ENCODE measurements at regions of chr2 and their contacts with region 1.

Region 1: GRCh38 chr2:227238238-227239237 is 74.1 kb downstream of the COL4A3 start:
- DNase-seq: peak; percentile 80
- ATAC-seq: no peak
- H3K4me3 Mint-ChIP-seq: no peak overlapping the region
- H3K27ac Mint-ChIP-seq: no peak overlapping the region
- H3K4me1 Mint-ChIP-seq: no peaks in the 10 kb centered on the region
- H3K27me3 Mint-ChIP-seq: peaks cover 6% of the 10 kb centered on the region

Region 2: DNA sequence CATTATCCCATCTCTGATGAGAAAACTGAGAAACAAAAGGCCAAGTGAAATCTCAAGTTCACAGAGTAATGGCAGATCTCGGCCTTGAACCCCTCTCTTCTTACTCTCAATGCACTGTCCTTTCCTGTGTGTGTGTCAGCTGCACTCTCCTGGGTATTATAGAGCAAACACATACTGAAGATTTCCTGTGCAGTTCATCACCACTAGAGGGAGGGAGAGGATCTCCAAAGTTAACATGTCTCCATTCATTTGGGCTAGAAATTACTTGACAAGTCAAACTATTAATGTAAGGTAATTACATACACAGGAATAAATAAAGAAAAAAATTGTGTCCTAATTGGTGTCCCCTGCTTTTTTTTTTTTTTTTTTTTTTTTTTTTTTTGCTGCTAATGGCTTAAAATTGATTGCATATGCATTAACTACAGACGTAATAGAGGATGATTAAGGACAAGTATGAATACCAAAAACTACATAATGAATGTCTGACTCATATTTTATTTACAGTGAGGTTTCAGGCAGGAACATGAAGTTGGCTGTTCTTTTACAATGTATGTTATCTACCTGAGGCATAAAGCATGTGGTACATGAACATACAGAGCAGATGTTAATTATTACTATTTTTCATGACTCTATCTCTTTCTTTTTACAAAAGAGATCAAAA is 1569.8 kb before region 1 on chr2:
- CTCF ChIA-PET with region 1: interaction called, 6 read pairs
- POLR2A ChIA-PET with region 1: no interaction called
- intact Hi-C with region 1: loop called in 1 of 2 experiments (anchors 1 kb)
- DNase-seq: peak; percentile 14
- ATAC-seq: peak; percentile 79
- H3K4me3 Mint-ChIP-seq: no peak overlapping the region
- H3K27ac Mint-ChIP-seq: no peak overlapping the region
- H3K4me1 Mint-ChIP-seq: no peaks in the 10 kb centered on the region
- H3K27me3 Mint-ChIP-seq: peaks cover 10% of the 10 kb centered on the region

Region 3: GRCh38 chr2:226137201-226137811 is 1101.2 kb before region 1 on chr2:
- CTCF ChIA-PET with region 1: no interaction called
- POLR2A ChIA-PET with region 1: no interaction called
- intact Hi-C with region 1: no loop called
- DNase-seq: no peak
- ATAC-seq: no peak
- H3K4me3 Mint-ChIP-seq: no peak overlapping the region
- H3K27ac Mint-ChIP-seq: no peak overlapping the region
- H3K4me1 Mint-ChIP-seq: no peaks in the 10 kb centered on the region
- H3K27me3 Mint-ChIP-seq: no peaks in the 10 kb centered on the region

Region 4: GRCh38 chr2:226977775-226978190 is 260.8 kb before region 1 on chr2:
- CTCF ChIA-PET with region 1: no interaction called
- POLR2A ChIA-PET with region 1: no interaction called
- intact Hi-C with region 1: no loop called
- DNase-seq: no peak
- ATAC-seq: peak; percentile 44
- H3K4me3 Mint-ChIP-seq: no peak overlapping the region
- H3K27ac Mint-ChIP-seq: no peak overlapping the region
- H3K4me1 Mint-ChIP-seq: peaks cover 18% of the 10 kb centered on the region
- H3K27me3 Mint-ChIP-seq: no peaks in the 10 kb centered on the region

Region 5: GRCh38 chr2:227125506-227125905 is 113.0 kb before region 1 on chr2:
- CTCF ChIA-PET with region 1: interaction called, 16 read pairs
- POLR2A ChIA-PET with region 1: interaction called, 4 read pairs
- intact Hi-C with region 1: loop called (anchors 1 kb)
- DNase-seq: peak; percentile 8
- ATAC-seq: no peak
- H3K4me3 Mint-ChIP-seq: no peak overlapping the region
- H3K27ac Mint-ChIP-seq: no peak overlapping the region
- H3K4me1 Mint-ChIP-seq: no peaks in the 10 kb centered on the region
- H3K27me3 Mint-ChIP-seq: peaks cover 15% of the 10 kb centered on the region

Region 6: GRCh38 chr2:227147023-227147422 is 91.5 kb before region 1 on chr2:
- CTCF ChIA-PET with region 1: interaction called, 4 read pairs
- POLR2A ChIA-PET with region 1: no interaction called
- intact Hi-C with region 1: loop called in 1 of 2 experiments (anchors 5 kb)
- DNase-seq: no peak
- ATAC-seq: no peak
- H3K4me3 Mint-ChIP-seq: no peak overlapping the region
- H3K27ac Mint-ChIP-seq: no peak overlapping the region
- H3K4me1 Mint-ChIP-seq: no peaks in the 10 kb centered on the region
- H3K27me3 Mint-ChIP-seq: peaks cover 10% of the 10 kb centered on the region

Region 7: GRCh38 chr2:227228061-227228667 is 10.4 kb before region 1 on chr2:
- CTCF ChIA-PET with region 1: interaction called, 10 read pairs
- POLR2A ChIA-PET with region 1: no interaction called
- intact Hi-C with region 1: no loop called
- DNase-seq: no peak
- ATAC-seq: no peak
- H3K4me3 Mint-ChIP-seq: no peak overlapping the region
- H3K27ac Mint-ChIP-seq: no peak overlapping the region
- H3K4me1 Mint-ChIP-seq: no peaks in the 10 kb centered on the region
- H3K27me3 Mint-ChIP-seq: peaks cover 8% of the 10 kb centered on the region

Region 8: DNA sequence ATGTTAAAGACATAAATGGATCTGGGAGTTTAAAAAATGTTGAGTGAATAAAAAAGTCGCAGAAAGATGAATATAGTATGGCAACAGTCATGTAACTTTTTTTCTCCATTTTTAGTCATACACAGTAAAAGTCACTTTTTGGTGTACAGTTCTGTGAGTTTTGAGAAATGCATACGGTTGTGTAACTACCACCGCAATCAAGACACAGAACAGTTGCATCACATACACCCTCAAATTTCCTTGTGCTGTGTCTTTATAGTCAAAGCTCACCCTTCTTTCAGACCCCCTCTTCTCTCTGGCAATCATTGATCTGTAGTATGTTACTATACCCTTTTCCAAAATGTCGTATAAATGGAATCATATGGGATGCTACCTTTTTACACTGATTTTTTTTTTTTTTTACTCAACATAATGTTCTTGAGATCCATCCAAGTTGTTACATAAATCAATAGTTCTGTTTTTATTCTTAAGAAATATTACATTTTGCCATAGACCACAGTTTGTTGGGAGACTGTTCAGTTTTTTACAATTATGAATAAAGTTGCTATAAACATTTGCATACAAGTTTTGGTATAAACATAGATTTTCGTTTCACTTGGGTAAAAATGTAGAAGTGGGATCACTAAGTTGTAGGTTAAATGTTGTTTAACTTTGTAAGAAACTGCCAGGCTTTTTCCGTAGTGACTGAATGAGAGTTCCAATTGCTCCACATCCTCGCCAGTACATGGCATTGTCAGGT is 198.1 kb after region 1 on chr2:
- CTCF ChIA-PET with region 1: no interaction called
- POLR2A ChIA-PET with region 1: no interaction called
- intact Hi-C with region 1: no loop called
- DNase-seq: no peak
- ATAC-seq: no peak
- H3K4me3 Mint-ChIP-seq: no peak overlapping the region
- H3K27ac Mint-ChIP-seq: no peak overlapping the region
- H3K4me1 Mint-ChIP-seq: no peaks in the 10 kb centered on the region
- H3K27me3 Mint-ChIP-seq: no peaks in the 10 kb centered on the region

Region 9: DNA sequence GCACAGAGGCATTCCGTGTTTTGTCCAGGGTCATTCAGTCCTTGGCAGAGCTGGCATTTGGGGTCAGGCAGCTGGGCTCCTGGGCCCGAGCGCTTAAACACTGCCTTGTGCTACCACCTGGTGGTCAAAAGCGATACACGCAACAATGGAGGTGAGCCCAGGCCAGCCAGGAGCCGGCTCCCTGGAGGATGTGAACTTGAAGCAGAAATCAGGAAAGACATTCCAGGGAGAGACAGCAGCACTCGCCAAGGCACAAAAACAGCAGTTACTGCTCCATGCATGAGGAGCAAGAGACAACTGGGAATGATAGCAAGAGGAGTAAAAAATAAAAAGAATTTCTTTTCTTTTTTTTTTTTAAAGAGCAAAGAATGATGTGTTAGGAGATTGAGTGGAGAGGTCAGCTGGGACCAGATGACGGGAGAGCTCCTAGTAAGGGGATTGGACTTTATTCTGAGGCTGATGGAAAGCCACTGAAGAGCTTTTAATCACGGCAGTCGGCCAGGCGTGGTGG is 527.9 kb after region 1 on chr2:
- CTCF ChIA-PET with region 1: interaction called, 13 read pairs
- POLR2A ChIA-PET with region 1: no interaction called
- intact Hi-C with region 1: loop called (anchors 2 to 5 kb)
- DNase-seq: peak; percentile 78
- ATAC-seq: peak; percentile 92
- H3K4me3 Mint-ChIP-seq: no peak overlapping the region
- H3K27ac Mint-ChIP-seq: no peak overlapping the region
- H3K4me1 Mint-ChIP-seq: no peaks in the 10 kb centered on the region
- H3K27me3 Mint-ChIP-seq: no peaks in the 10 kb centered on the region

Measured in activated CD4-positive, alpha-beta T cell treated with anti-CD3 and anti-CD28 coated beads for 36 hours (primary cell).